Activated B cell treated with CpG ODN at 0.5 μM for 24 hours (primary cell): ENCODE measurements at regions of chr2 and their contacts with region 1.

Region 1: DNA sequence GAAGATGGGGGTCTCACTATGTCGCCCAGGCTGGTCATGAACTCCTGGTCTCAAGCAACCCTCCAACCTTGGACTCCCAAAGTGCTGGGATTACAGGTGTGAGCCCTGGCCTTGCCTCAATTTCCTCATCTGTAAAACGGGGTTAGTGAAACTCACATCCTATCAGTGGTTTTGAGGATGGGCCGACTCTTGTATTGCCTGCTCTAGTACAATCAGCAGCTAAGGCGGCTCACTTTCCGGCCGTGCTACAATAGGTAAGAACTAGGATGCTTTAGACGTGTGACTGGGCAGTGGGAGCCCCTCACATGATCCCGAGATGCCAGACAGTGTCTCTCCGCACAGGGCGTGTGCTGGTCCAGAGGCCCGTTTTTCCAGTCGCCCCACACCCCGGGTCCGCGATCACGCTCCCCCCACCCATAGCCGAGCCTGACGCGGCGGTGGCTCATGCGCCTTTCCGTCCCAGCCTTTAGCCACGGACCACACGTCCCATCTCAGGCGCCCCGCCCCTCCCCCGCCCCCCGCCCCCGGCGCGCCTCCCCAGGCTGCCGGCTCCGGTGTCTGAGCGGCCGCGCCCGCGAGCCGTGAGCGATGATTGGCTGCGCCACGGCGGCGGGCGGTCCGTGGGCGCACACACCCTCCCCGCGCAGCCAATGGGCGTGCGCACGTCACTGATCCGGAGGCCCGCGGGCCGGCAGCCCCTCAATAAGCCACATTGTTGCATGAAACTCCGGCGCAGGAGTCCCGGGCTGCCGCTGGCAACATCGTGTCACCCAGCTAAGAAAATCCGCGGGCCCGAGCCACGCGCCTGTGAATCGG is at the start of gene HK2:
- DNase-seq: peak; percentile 80
- ATAC-seq: peak; percentile 82
- H3K4me3 Mint-ChIP-seq: peak within 1 kb of the TSS; percentile 95
- H3K27ac Mint-ChIP-seq: peak within 1 kb of the TSS; percentile 90
- H3K4me1 Mint-ChIP-seq: peaks cover 32% of the 10 kb centered on the region
- H3K27me3 Mint-ChIP-seq: no peaks in the 10 kb centered on the region
- CTCF ChIP-seq: no peak
- total RNA-seq, gene HK2: 14.5 and 15.3 TPM in 2 replicates

Region 2: GRCh38 chr2:73736855-73737779 is 1096.5 kb before region 1 on chr2 and contains the start of gene TPRKB:
- CTCF ChIA-PET with region 1: no interaction called
- POLR2A ChIA-PET with region 1: no interaction called
- intact Hi-C with region 1: loop called (anchors 2 kb)
- DNase-seq: peak; percentile 85
- ATAC-seq: peak; percentile 98
- H3K4me3 Mint-ChIP-seq: peak within 1 kb of the TSS; percentile 94
- H3K27ac Mint-ChIP-seq: peak within 1 kb of the TSS; percentile 90
- H3K4me1 Mint-ChIP-seq: peaks cover 18% of the 10 kb centered on the region
- H3K27me3 Mint-ChIP-seq: no peaks in the 10 kb centered on the region
- CTCF ChIP-seq: no peak
- total RNA-seq, gene TPRKB: 26.9 and 27.1 TPM in 2 replicates

Region 3: GRCh38 chr2:74715078-74715791 is 118.4 kb before region 1 on chr2:
- CTCF ChIA-PET with region 1: interaction called, 5 read pairs
- POLR2A ChIA-PET with region 1: no interaction called
- intact Hi-C with region 1: loop called (anchors 1 kb)
- DNase-seq: peak; percentile 75
- ATAC-seq: peak; percentile 89
- H3K4me3 Mint-ChIP-seq: peak overlapping the region; percentile 87
- H3K27ac Mint-ChIP-seq: no peak overlapping the region
- H3K4me1 Mint-ChIP-seq: peaks cover 8% of the 10 kb centered on the region
- H3K27me3 Mint-ChIP-seq: peaks cover 12% of the 10 kb centered on the region
- CTCF ChIP-seq: no peak

Region 4: GRCh38 chr2:74845217-74846011 is 11.8 kb after region 1 on chr2:
- CTCF ChIA-PET with region 1: interaction called, 19 read pairs
- POLR2A ChIA-PET with region 1: interaction called, 47 read pairs
- intact Hi-C with region 1: loop called (anchors 1 kb)
- DNase-seq: no peak
- ATAC-seq: no peak
- H3K4me3 Mint-ChIP-seq: no peak overlapping the region
- H3K27ac Mint-ChIP-seq: peak overlapping the region; percentile 59
- H3K4me1 Mint-ChIP-seq: peaks cover 70% of the 10 kb centered on the region
- H3K27me3 Mint-ChIP-seq: no peaks in the 10 kb centered on the region
- CTCF ChIP-seq: no peak

Region 5: GRCh38 chr2:74867841-74868658 is 34.4 kb after region 1 on chr2:
- CTCF ChIA-PET with region 1: interaction called, 6 read pairs
- POLR2A ChIA-PET with region 1: interaction called, 7 read pairs
- intact Hi-C with region 1: loop called (anchors 2 kb)
- DNase-seq: no peak
- ATAC-seq: no peak
- H3K4me3 Mint-ChIP-seq: no peak overlapping the region
- H3K27ac Mint-ChIP-seq: no peak overlapping the region
- H3K4me1 Mint-ChIP-seq: peaks cover 35% of the 10 kb centered on the region
- H3K27me3 Mint-ChIP-seq: no peaks in the 10 kb centered on the region
- CTCF ChIP-seq: no peak

Region 6: DNA sequence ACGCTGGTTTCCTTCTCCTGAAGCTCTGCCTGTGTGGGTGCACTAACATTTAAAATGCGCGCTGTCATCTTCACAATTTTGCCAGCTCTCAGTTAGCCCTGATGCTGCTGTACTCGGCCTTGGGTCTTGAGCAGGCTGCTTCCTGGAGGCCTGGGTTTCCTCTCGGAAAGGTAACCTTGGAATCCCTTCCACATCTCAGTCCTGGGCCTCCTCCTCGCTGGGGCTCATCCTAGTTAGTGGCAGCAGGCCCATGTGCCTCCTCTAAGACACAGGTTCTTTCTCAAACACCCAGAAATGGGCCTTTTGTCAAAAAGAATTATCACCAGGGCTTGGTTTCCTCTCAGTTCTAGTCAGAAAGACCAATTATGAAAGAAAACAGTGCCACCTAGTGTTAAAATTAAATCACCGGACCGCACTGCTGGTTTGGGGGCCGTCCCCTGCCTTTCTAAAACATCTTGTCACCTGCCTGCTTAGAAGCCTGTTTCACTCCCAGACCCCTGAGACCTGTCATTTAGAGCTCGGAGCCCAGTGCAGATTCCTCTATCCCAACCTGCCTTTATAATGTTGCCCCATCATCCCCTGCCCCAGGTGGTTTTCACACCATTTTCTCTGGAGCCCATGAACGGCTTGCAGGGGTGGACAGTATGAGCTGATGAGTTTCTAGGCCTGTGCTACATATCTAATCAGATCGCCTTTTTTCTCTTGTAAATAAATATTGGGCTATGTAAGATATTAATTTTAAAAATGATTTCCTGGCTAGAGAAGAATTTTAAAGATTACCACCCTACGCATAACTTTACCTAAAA is 42.7 kb after region 1 on chr2:
- CTCF ChIA-PET with region 1: interaction called, 40 read pairs
- POLR2A ChIA-PET with region 1: interaction called, 7 read pairs
- intact Hi-C with region 1: loop called (anchors 1 kb)
- DNase-seq: peak; percentile 24
- ATAC-seq: peak; percentile 69
- H3K4me3 Mint-ChIP-seq: no peak overlapping the region
- H3K27ac Mint-ChIP-seq: no peak overlapping the region
- H3K4me1 Mint-ChIP-seq: no peaks in the 10 kb centered on the region
- H3K27me3 Mint-ChIP-seq: no peaks in the 10 kb centered on the region
- CTCF ChIP-seq: peak; percentile 41

Region 7: GRCh38 chr2:75432761-75433361 is 599.2 kb after region 1 on chr2:
- CTCF ChIA-PET with region 1: no interaction called
- POLR2A ChIA-PET with region 1: no interaction called
- intact Hi-C with region 1: loop called (anchors 10 kb)
- DNase-seq: peak; percentile 24
- ATAC-seq: peak; percentile 69
- H3K4me3 Mint-ChIP-seq: peak overlapping the region; percentile 60
- H3K27ac Mint-ChIP-seq: peak overlapping the region; percentile 83
- H3K4me1 Mint-ChIP-seq: peaks cover 57% of the 10 kb centered on the region
- H3K27me3 Mint-ChIP-seq: no peaks in the 10 kb centered on the region
- CTCF ChIP-seq: no peak